Vagina (tissue), 2 donors: ENCODE measurements at regions of chr12 and their contacts with region 1.

Region 1: DNA sequence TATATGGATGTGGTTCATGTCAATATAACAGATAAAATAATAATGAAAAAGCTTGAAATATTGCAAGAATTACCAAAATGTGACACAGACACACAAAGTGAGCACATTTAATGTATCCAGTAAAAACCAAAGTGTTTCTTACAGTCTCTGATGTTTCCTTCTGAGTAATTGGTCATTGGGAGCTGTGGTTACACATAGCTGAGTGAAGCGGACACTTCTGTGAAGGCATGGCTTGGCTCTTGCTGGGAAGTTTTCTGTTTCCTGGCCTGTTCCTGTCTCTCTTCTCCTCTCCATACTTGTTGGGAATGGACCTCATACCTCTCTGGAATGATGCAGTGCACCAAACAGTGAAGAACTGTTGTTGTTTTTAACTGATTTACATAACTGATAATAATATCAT is 117.3 kb downstream of the BICD1 start:
- DNase-seq: no peak
- H3K4me3 ChIP-seq: no peak overlapping the region
- H3K27ac ChIP-seq: no peak overlapping the region
- H3K4me1 ChIP-seq: no peaks in the 10 kb centered on the region
- H3K27me3 ChIP-seq: no peaks in the 10 kb centered on the region
- CTCF ChIP-seq: no peak
- POLR2A ChIP-seq: no peak

Region 2: GRCh38 chr12:31205054-31205453 is 1018.9 kb before region 1 on chr12:
- intact Hi-C with region 1: loop called (anchors 5 kb)
- DNase-seq: no peak
- H3K4me3 ChIP-seq: no peak overlapping the region
- H3K27ac ChIP-seq: no peak overlapping the region
- H3K4me1 ChIP-seq: peaks cover 13% of the 10 kb centered on the region
- H3K27me3 ChIP-seq: no peaks in the 10 kb centered on the region
- CTCF ChIP-seq: no peak
- POLR2A ChIP-seq: no peak

Region 3: DNA sequence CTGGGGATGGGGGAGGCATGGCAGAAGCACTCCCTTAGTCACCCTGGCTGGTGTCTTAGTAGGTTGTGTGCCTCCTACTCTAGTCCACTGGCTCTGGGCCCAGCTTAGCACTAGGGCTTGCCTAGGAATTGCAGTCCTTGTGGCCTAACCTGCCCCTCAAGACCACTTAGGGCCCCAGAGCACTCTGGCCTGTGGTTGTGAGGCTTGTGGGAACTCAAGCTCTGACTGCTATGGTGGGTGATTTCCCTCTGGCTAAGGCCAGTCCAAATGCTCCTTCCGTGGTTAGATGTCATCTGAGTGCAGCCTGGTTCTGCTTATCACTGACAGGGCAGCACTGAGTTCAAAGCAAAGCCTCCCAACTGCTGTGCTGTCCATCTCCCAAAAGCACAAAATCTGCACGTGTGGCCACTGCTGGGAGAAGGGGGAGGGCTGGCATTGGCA is 195.6 kb after region 1 on chr12:
- intact Hi-C with region 1: no loop called
- DNase-seq: no peak
- H3K4me3 ChIP-seq: no peak overlapping the region
- H3K27ac ChIP-seq: no peak overlapping the region
- H3K4me1 ChIP-seq: peaks cover 8% of the 10 kb centered on the region
- H3K27me3 ChIP-seq: no peaks in the 10 kb centered on the region
- CTCF ChIP-seq: no peak
- POLR2A ChIP-seq: no peak